H1 (cell line): ENCODE measurements at regions of chr2 and their contacts with region 1.

Region 1: GRCh38 chr2:58871469-58872142 is 630.5 kb upstream of the FANCL start:
- DNase-seq: no peak
- H3K4me3 ChIP-seq: no peak overlapping the region
- H3K27ac ChIP-seq: no peak overlapping the region
- H3K4me1 ChIP-seq: peaks cover under 1 to 5% (median 2%) of the 10 kb centered on the region in 4 experiments; a peak in 4 of 7 replicates
- H3K27me3 ChIP-seq: peaks cover 0 to 5% (median 0%) of the 10 kb centered on the region in 4 experiments; a peak in 2 of 7 replicates
- CTCF ChIP-seq: peak in 2 of 3 experiments; percentile 47 to 53; a peak in 2 of 4 replicates
- EP300 ChIP-seq: no peak
- POLR2A ChIP-seq: no peak
- RAD21 ChIP-seq: peak; percentile 52 to 61

Region 2: GRCh38 chr2:58762176-58762781 is 109.3 kb before region 1 on chr2:
- CTCF ChIA-PET with region 1: interaction called, 18 read pairs
- POLR2A ChIA-PET with region 1: no interaction called
- DNase-seq: peak; percentile 80 to 84
- H3K4me3 ChIP-seq: no peak overlapping the region
- H3K27ac ChIP-seq: no peak overlapping the region
- H3K4me1 ChIP-seq: peaks cover 0 to 7% (median 4%) of the 10 kb centered on the region in 4 experiments; a peak in 4 of 7 replicates
- H3K27me3 ChIP-seq: no peaks in the 10 kb centered on the region
- CTCF ChIP-seq: peak; percentile 57 to 92 (median 85)
- EP300 ChIP-seq: no peak
- POLR2A ChIP-seq: no peak
- RAD21 ChIP-seq: peak; percentile 95 to 97

Region 3: GRCh38 chr2:58834404-58834803 is 37.2 kb before region 1 on chr2:
- CTCF ChIA-PET with region 1: interaction called, 12 read pairs
- POLR2A ChIA-PET with region 1: no interaction called
- DNase-seq: peak in 1 of 2 experiments; percentile 77
- H3K4me3 ChIP-seq: no peak overlapping the region
- H3K27ac ChIP-seq: no peak overlapping the region
- H3K4me1 ChIP-seq: peaks cover 0 to 10% (median 3%) of the 10 kb centered on the region in 4 experiments; a peak in 4 of 7 replicates
- H3K27me3 ChIP-seq: no peaks in the 10 kb centered on the region
- CTCF ChIP-seq: no peak
- EP300 ChIP-seq: no peak
- POLR2A ChIP-seq: no peak
- RAD21 ChIP-seq: peak in 1 of 2 experiments; percentile 7; a peak in 1 of 4 replicates

Region 4: GRCh38 chr2:58853420-58853819 is 18.2 kb before region 1 on chr2:
- CTCF ChIA-PET with region 1: interaction called, 14 read pairs
- POLR2A ChIA-PET with region 1: interaction called, 3 read pairs
- DNase-seq: no peak
- H3K4me3 ChIP-seq: no peak overlapping the region
- H3K27ac ChIP-seq: no peak overlapping the region
- H3K4me1 ChIP-seq: no peaks in the 10 kb centered on the region; a peak in 2 of 7 replicates
- H3K27me3 ChIP-seq: no peaks in the 10 kb centered on the region
- CTCF ChIP-seq: no peak
- EP300 ChIP-seq: no peak
- POLR2A ChIP-seq: no peak
- RAD21 ChIP-seq: peak in 1 of 2 experiments; percentile 17; a peak in 1 of 4 replicates

Region 5: DNA sequence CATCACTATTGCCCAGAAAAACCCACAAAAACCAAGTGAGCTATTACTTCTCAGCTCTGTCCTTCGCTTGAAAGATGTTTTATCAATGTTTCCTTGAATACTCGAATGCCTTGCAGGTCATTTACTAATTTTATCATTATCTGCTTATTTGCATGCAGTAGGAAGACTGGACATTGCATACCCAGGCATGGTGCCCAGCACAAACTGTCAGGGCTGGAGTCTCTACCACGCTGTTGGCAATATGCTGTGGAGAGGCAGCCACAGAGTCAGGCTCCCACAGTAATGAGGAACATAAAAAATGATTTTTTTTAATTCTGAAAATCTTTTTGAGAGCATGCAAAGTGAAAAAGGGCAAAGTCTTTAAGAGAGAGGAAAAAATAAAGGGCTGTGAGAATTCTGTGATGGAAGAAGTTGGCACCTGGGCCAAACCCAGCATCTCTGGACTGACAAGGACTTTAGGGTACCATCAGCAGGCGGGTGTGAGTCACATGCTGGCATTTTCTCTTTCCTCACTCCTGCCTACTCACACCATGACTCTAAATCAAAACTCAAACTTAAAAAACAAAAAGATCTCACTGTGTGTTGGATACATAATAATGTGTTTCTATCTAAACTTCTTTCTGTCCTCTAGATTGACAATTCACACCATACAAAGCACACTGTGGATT is 79.3 kb after region 1 on chr2:
- CTCF ChIA-PET with region 1: no interaction called
- POLR2A ChIA-PET with region 1: no interaction called
- DNase-seq: no peak
- H3K4me3 ChIP-seq: no peak overlapping the region
- H3K27ac ChIP-seq: no peak overlapping the region
- H3K4me1 ChIP-seq: peaks cover 10 to 22% (median 15%) of the 10 kb centered on the region in 4 experiments; a peak in 6 of 7 replicates
- H3K27me3 ChIP-seq: no peaks in the 10 kb centered on the region; a peak in 1 of 7 replicates
- CTCF ChIP-seq: no peak
- EP300 ChIP-seq: no peak
- POLR2A ChIP-seq: no peak
- RAD21 ChIP-seq: no peak

Region 6: DNA sequence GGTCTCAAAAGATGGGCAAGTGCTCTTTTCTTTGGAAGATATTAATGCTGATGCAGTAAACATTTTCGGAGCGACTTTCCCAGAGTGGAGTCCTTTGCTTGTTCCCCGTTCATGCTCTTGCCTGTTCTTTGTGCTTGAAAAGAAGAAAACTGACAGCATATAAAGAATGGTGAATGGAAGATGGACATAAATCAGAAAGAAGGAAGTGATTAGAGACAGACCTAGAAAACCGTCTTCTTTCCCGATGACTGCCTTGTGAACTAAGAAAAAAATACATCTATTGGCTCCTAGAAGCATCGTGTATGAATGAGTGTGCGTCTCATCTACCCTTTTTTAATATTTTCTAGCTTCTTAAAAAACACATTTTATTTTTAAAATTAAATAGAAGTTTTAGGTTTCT is 109.6 kb after region 1 on chr2:
- CTCF ChIA-PET with region 1: no interaction called
- POLR2A ChIA-PET with region 1: no interaction called
- DNase-seq: no peak
- H3K4me3 ChIP-seq: no peak overlapping the region
- H3K27ac ChIP-seq: no peak overlapping the region
- H3K4me1 ChIP-seq: peaks cover 0 to 11% (median 5%) of the 10 kb centered on the region in 4 experiments; a peak in 4 of 7 replicates
- H3K27me3 ChIP-seq: no peaks in the 10 kb centered on the region
- CTCF ChIP-seq: no peak
- EP300 ChIP-seq: no peak
- POLR2A ChIP-seq: no peak
- RAD21 ChIP-seq: no peak